CD8-positive, alpha-beta T cell (primary cell): ENCODE measurements at regions of chr17 and their contacts with region 1.

Region 1: DNA sequence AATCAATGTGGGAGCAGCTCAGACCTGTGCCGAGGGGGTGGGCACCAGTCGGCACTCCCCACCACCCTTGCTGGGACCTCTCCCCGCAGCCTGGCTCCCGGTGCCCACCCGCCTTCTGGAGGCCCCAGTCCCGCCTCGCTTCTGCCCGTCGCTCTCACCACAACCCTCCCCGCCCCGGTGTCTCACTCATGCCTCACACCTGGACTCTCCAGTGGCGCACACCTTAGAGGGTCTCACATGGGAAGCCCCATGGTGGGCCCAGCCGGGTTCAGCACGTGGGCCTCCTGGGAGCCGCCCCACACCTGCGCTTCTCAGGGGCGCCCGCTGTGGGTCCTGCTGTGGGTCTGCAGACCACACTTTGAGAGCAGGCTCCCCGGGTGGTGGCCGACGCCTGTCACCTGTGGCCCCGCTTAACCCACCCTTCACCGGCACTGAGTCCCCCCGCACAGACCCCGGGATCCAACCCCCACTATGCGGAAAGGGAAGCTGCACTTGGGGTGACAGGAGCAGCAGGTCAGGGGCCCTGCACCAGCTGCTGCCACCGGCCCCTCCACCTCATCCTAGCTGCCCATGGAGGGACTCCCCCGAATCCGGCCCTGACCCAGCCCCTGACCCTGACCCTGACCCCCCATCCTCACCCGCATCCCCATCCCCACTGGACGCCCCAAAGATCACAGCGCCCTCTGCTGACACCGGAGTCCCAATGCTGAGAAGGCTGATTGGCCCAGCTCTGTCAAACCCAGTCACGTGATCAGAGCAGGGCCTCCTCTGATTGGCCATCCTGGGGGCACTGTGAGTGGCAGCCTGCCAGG is 27.4 kb upstream of the SLC38A10 start:
- DNase-seq: peak in 5 of 9 experiments; percentile 21 to 60 (median 48)
- ATAC-seq: peak; percentile 56
- H3K4me3 ChIP-seq: no peak overlapping the region
- H3K4me3 Mint-ChIP-seq: no peak overlapping the region
- H3K27ac ChIP-seq: no peak overlapping the region
- H3K27ac Mint-ChIP-seq: no peak overlapping the region
- H3K4me1 ChIP-seq: no peaks in the 10 kb centered on the region
- H3K4me1 Mint-ChIP-seq: peaks cover 3% of the 10 kb centered on the region
- H3K27me3 ChIP-seq: peaks cover 0 to 3% of the 10 kb centered on the region in 2 experiments
- H3K27me3 Mint-ChIP-seq: no peaks in the 10 kb centered on the region
- CTCF ChIP-seq: no peak

Region 2: GRCh38 chr17:81346090-81346907 is 23.8 kb after region 1 on chr17:
- CTCF ChIA-PET with region 1: no interaction called
- POLR2A ChIA-PET with region 1: no interaction called
- intact Hi-C with region 1: no loop called
- DNase-seq: peak; percentile 81 to 96 (median 94)
- ATAC-seq: peak; percentile 96
- H3K4me3 ChIP-seq: peak overlapping the region; percentile 43 to 47
- H3K4me3 Mint-ChIP-seq: peak overlapping the region; percentile 63
- H3K27ac ChIP-seq: no peak overlapping the region
- H3K27ac Mint-ChIP-seq: no peak overlapping the region
- H3K4me1 ChIP-seq: peaks cover 34% of the 10 kb centered on the region
- H3K4me1 Mint-ChIP-seq: peaks cover 21% of the 10 kb centered on the region
- H3K27me3 ChIP-seq: peaks cover 34 to 37% of the 10 kb centered on the region in 2 experiments
- H3K27me3 Mint-ChIP-seq: peaks cover 24% of the 10 kb centered on the region
- CTCF ChIP-seq: no peak

Region 3: DNA sequence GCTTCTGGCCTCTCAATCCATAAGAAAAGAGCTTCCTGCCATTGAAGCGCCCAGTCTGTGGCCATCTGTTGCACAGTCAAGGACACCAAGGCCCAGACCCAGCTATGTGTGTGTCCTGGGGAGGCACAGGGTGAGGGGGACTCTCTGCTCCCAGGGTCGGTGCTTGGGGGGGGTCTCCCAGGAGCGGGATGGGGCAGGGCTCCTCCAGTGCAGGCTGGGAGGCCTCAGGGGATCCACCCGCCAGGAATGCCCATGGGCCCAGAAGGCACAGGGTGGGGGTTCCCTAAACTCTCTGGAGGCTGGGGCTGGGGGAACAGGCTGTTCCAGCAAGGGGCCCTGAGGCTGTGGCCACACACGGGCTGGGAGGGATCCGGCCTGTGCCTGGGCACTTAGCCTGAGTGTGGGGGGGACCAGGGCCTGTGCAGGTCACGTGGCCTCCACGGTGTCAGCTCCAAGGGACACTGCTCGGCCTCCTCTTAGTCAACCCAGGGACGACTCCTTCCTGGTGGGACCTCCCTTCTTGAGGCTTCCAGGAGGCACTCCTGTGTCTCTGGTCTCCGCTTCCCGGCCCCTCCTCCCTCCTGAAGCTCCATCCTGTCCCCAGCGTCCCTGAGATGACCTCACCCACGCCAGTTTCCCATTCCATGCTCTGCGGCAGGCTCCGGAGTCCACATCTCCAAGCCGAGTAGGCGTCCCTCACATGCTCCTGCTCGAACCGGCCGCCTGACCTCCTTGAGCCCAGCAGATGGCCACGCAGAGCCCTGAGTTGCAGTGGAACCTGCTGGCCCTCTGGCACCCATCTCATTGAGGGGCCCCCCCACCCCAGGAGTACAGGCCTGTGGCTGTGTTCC is 49.7 kb after region 1 on chr17:
- CTCF ChIA-PET with region 1: no interaction called
- POLR2A ChIA-PET with region 1: no interaction called
- intact Hi-C with region 1: loop called in 1 of 2 experiments (anchors 5 kb)
- DNase-seq: no peak
- ATAC-seq: no peak
- H3K4me3 ChIP-seq: no peak overlapping the region
- H3K4me3 Mint-ChIP-seq: no peak overlapping the region
- H3K27ac ChIP-seq: no peak overlapping the region
- H3K27ac Mint-ChIP-seq: no peak overlapping the region
- H3K4me1 ChIP-seq: no peaks in the 10 kb centered on the region
- H3K4me1 Mint-ChIP-seq: no peaks in the 10 kb centered on the region
- H3K27me3 ChIP-seq: no peaks in the 10 kb centered on the region
- H3K27me3 Mint-ChIP-seq: no peaks in the 10 kb centered on the region
- CTCF ChIP-seq: no peak

Region 4: DNA sequence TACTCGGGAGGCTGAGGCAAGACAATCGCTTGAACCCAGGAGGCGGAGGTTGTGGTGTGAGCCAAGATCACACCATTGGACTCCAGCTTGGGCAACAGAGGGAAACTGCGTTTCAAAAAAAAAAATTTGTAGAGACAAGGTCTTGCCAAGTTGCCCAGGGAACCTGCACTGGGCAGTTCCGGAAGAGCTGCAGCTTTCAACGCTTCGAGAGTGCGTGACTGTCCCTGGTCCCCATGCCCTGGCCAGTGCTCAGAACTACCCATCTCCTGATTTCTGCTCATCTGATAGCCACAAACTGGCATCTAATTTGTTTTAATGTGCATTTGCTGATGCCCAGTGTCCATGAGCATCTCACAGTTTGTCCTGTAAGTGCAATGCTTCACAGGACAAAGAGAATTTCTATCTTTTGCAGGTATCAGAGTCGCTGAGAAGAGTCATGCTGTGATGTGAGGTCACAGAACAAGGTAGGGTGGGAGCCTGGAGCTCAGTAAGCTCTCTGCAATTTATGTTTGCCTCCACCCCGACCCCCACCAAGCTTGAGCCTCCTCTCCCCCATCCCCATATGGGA is 186.2 kb after region 1 on chr17:
- CTCF ChIA-PET with region 1: no interaction called
- POLR2A ChIA-PET with region 1: no interaction called
- intact Hi-C with region 1: no loop called
- DNase-seq: no peak
- ATAC-seq: no peak
- H3K4me3 ChIP-seq: peak overlapping the region; percentile 84 to 93
- H3K4me3 Mint-ChIP-seq: peak overlapping the region; percentile 98
- H3K27ac ChIP-seq: peak overlapping the region; percentile 56 to 75
- H3K27ac Mint-ChIP-seq: peak overlapping the region; percentile 98
- H3K4me1 ChIP-seq: peaks cover 25% of the 10 kb centered on the region
- H3K4me1 Mint-ChIP-seq: peaks cover 41% of the 10 kb centered on the region
- H3K27me3 ChIP-seq: no peaks in the 10 kb centered on the region
- H3K27me3 Mint-ChIP-seq: no peaks in the 10 kb centered on the region
- CTCF ChIP-seq: no peak